ENCODE measurements at regions of chr12 and their contacts with region 1.

Region 1: DNA sequence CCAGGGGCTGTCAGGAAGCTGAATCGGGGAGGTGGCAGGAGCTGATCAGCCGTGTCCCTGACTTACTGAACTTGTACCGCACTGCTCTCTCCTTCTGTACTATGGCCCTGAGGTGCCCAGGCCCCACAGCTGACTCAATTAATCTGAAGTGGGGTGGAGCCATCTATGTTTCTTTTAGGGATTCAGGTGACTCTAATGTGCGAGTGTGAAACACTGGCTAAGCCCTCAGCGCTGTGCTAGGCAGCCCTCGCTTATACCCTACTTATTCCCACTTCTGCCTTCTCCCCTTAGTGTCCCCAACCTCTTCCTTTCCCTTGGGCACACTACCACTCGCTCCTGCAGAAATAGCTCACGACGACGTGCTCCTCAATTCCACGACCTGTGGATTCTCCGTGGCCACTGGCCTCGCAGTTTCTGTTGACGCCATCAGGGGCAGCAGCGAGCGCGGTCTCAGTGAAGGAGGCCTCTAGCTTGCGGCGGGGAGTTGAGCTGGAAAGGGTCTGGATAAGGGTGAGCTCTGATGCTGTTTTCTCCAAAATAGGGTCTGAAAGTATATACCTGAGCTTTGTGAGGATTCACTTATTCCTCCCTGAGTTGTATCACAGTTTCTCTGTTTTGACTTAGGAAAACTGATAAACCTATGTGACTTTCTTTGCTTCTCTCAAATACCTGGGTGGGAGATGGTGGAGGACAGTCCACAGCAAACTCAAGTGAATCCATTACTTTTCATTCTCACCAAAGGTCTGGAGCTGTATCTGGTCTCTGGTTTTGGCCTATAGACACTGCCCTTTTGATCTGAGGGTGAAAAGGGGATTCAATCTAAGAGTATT is 167.6 kb downstream of the SLC41A2 start:
- DNase-seq: peak; percentile 31
- CTCF ChIP-seq: peak; percentile 83

Region 2: GRCh38 chr12:104615048-104615561 is 175.4 kb before region 1 on chr12:
- CTCF ChIA-PET with region 1: no interaction called
- POLR2A ChIA-PET with region 1: no interaction called
- DNase-seq: no peak
- CTCF ChIP-seq: no peak

Region 3: GRCh38 chr12:104763168-104763805 is 27.2 kb before region 1 on chr12:
- CTCF ChIA-PET with region 1: interaction called, 11 read pairs
- POLR2A ChIA-PET with region 1: no interaction called
- DNase-seq: no peak
- CTCF ChIP-seq: no peak

Region 4: DNA sequence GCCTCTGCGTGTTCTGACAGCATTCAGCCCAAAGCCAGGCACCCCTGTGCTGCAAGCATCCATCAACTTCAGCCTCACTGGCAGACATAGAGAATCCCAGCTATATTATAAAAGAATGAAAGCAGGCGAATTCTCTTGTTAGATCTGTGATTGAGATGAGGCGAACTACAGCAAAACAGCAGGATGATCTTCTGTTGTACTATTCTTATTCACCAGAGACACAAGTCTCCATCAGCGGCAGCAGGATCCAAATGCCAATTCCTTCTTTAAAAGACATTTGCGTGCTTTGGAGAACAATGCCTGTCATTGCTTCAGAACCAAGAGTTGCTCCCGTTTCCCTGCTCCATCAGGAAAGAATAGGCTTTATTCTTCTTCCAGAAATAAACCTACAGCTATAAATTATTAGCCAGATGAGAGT is 21.4 kb before region 1 on chr12:
- CTCF ChIA-PET with region 1: interaction called, 10 read pairs
- POLR2A ChIA-PET with region 1: no interaction called
- DNase-seq: no peak
- CTCF ChIP-seq: no peak

Region 5: GRCh38 chr12:104779134-104779533 is 11.4 kb before region 1 on chr12:
- CTCF ChIA-PET with region 1: interaction called, 33 read pairs
- POLR2A ChIA-PET with region 1: no interaction called
- DNase-seq: no peak
- CTCF ChIP-seq: no peak

Region 6: GRCh38 chr12:104805186-104805585 is 14.7 kb after region 1 on chr12:
- CTCF ChIA-PET with region 1: interaction called, 23 read pairs
- POLR2A ChIA-PET with region 1: no interaction called
- DNase-seq: no peak
- CTCF ChIP-seq: no peak

Region 7: GRCh38 chr12:104815935-104816334 is 25.4 kb after region 1 on chr12:
- CTCF ChIA-PET with region 1: interaction called, 13 read pairs
- POLR2A ChIA-PET with region 1: no interaction called
- DNase-seq: no peak
- CTCF ChIP-seq: no peak